Endothelial cell of umbilical vein (primary cell): ENCODE measurements at regions of chr17 and their contacts with region 1.

Region 1: GRCh38 chr17:48259694-48260291 is 152.2 kb downstream of the SNX11 start:
- DNase-seq: peak; percentile 62
- H3K4me3 ChIP-seq: no peak overlapping the region
- H3K27ac ChIP-seq: no peak overlapping the region
- H3K4me1 ChIP-seq: peaks cover 18% of the 10 kb centered on the region
- H3K27me3 ChIP-seq: no peaks in the 10 kb centered on the region
- CTCF ChIP-seq: peak; percentile 49 to 53
- POLR2A ChIP-seq: no peak

Region 2: GRCh38 chr17:48181653-48182052 is 78.1 kb before region 1 on chr17:
- CTCF ChIA-PET with region 1: interaction called, 11 read pairs
- POLR2A ChIA-PET with region 1: no interaction called
- dilution Hi-C with region 1: no loop called
- intact Hi-C with region 1: no loop called
- DNase-seq: peak; percentile 31
- H3K4me3 ChIP-seq: no peak overlapping the region
- H3K27ac ChIP-seq: no peak overlapping the region
- H3K4me1 ChIP-seq: no peaks in the 10 kb centered on the region
- H3K27me3 ChIP-seq: peaks cover 9 to 23% of the 10 kb centered on the region in 2 experiments
- CTCF ChIP-seq: peak; percentile 37 to 52
- POLR2A ChIP-seq: no peak

Region 3: GRCh38 chr17:48270896-48271295 is 11.1 kb after region 1 on chr17:
- CTCF ChIA-PET with region 1: interaction called, 32 read pairs
- POLR2A ChIA-PET with region 1: no interaction called
- dilution Hi-C with region 1: no loop called
- intact Hi-C with region 1: no loop called
- DNase-seq: no peak
- H3K4me3 ChIP-seq: no peak overlapping the region
- H3K27ac ChIP-seq: no peak overlapping the region
- H3K4me1 ChIP-seq: no peaks in the 10 kb centered on the region
- H3K27me3 ChIP-seq: no peaks in the 10 kb centered on the region
- CTCF ChIP-seq: no peak
- POLR2A ChIP-seq: no peak

Region 4: GRCh38 chr17:48307814-48308411 is 48.1 kb after region 1 on chr17:
- CTCF ChIA-PET with region 1: interaction called, 78 read pairs
- POLR2A ChIA-PET with region 1: interaction called, 5 read pairs
- dilution Hi-C with region 1: no loop called
- intact Hi-C with region 1: loop called (anchors 2 kb)
- DNase-seq: peak; percentile 59
- H3K4me3 ChIP-seq: no peak overlapping the region
- H3K27ac ChIP-seq: no peak overlapping the region
- H3K4me1 ChIP-seq: no peaks in the 10 kb centered on the region
- H3K27me3 ChIP-seq: no peaks in the 10 kb centered on the region
- CTCF ChIP-seq: peak; percentile 79 to 84
- POLR2A ChIP-seq: no peak

Region 5: DNA sequence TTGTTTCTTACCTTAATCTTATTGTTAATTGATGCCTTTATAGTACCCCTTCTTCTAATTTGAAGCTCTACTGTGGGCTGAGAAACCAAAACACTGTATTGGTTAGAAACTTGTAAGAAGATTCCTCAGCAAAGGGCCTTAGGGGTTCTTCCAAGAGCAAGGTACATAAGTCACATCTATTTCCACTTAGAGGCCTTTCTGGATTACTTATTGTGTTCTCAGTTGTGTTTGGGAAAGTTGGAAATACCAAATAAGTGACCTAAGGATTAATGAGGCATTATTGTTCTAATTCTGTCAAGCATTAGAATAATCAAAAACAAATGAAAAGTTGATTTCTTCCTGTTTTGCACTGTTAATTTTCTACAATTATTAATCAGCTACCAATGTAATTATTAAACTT is 84.5 kb after region 1 on chr17:
- CTCF ChIA-PET with region 1: interaction called, 20 read pairs
- POLR2A ChIA-PET with region 1: no interaction called
- dilution Hi-C with region 1: no loop called
- intact Hi-C with region 1: no loop called
- DNase-seq: no peak
- H3K4me3 ChIP-seq: no peak overlapping the region
- H3K27ac ChIP-seq: no peak overlapping the region
- H3K4me1 ChIP-seq: no peaks in the 10 kb centered on the region
- H3K27me3 ChIP-seq: peaks cover 0 to 4% of the 10 kb centered on the region in 2 experiments
- CTCF ChIP-seq: no peak
- POLR2A ChIP-seq: no peak

Region 6: DNA sequence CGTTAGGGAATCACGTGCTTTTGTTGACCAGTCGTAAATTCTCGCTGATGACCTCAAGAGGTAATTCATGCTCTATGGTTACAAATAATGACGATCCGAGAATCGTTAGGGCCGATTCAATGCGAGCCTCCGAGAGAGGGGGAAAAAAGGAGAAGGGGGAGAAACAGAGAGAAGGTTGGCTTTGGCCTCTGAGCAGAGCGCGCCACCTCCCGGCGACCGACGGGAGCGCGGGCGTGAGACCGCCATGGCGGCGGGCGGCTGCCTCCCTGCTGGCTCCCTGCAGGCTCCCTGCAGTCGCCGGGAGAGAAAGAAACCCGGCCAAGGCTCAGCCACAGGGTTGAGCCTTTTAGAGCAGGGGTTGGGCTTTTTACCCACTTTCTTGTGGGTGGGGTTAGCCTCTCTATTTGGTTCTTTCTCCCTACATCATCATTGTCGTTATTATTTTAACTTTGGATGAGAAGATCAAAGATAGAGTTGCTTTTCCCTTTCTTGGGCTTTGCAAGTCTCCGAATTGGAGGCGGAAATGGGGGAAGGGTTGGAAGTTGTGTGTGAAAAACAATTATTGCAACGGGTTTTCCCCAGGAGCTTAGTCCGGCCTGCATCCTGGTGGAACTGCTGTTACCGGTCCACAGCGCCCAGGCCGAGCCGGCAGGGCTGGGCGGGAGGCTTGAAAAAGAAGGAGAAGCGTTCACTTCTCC is 334.2 kb after region 1 on chr17:
- CTCF ChIA-PET with region 1: interaction called, 31 read pairs
- POLR2A ChIA-PET with region 1: no interaction called
- dilution Hi-C with region 1: no loop called
- intact Hi-C with region 1: no loop called
- DNase-seq: peak; percentile 86
- H3K4me3 ChIP-seq: no peak overlapping the region
- H3K27ac ChIP-seq: peak overlapping the region; percentile 0
- H3K4me1 ChIP-seq: peaks cover 25% of the 10 kb centered on the region
- H3K27me3 ChIP-seq: no peaks in the 10 kb centered on the region
- CTCF ChIP-seq: peak; percentile 95 to 97
- POLR2A ChIP-seq: no peak